ENCODE measurements at regions of chr18 and their contacts with region 1.

Region 1: GRCh38 chr18:12911025-12911928 is 27.2 kb upstream of the PTPN2 start:
- DNase-seq: no peak
- H3K4me3 ChIP-seq: no peak overlapping the region
- H3K27ac ChIP-seq: no peak overlapping the region
- H3K4me1 ChIP-seq: no peaks in the 10 kb centered on the region
- H3K27me3 ChIP-seq: no peaks in the 10 kb centered on the region; the same call in 1 of the 2 replicates
- CTCF ChIP-seq: no peak

Region 2: GRCh38 chr18:12593866-12594265 is 317.4 kb before region 1 on chr18:
- CTCF ChIA-PET with region 1: no interaction called
- POLR2A ChIA-PET with region 1: no interaction called
- intact Hi-C with region 1: no loop called
- DNase-seq: no peak
- H3K4me3 ChIP-seq: no peak overlapping the region
- H3K27ac ChIP-seq: no peak overlapping the region
- H3K4me1 ChIP-seq: peaks cover 36% of the 10 kb centered on the region
- H3K27me3 ChIP-seq: no peaks in the 10 kb centered on the region
- CTCF ChIP-seq: no peak

Region 3: GRCh38 chr18:12890506-12890905 is 20.8 kb before region 1 on chr18:
- CTCF ChIA-PET with region 1: interaction called, 16 read pairs
- POLR2A ChIA-PET with region 1: interaction called, 3 read pairs
- intact Hi-C with region 1: no loop called
- DNase-seq: peak; percentile 22 to 59
- H3K4me3 ChIP-seq: peak overlapping the region; percentile 6; the same call in 1 of the 2 replicates
- H3K27ac ChIP-seq: peak overlapping the region; percentile 95
- H3K4me1 ChIP-seq: peaks cover 41% of the 10 kb centered on the region
- H3K27me3 ChIP-seq: no peaks in the 10 kb centered on the region
- CTCF ChIP-seq: peak; percentile 45; the same call in 1 of the 2 replicates

Measured in PC-9 (cell line).